ENCODE measurements at regions of chr2 and their contacts with region 1.

Region 1: GRCh38 chr2:195656859-195657633 is at the start of gene SLC39A10:
- DNase-seq: peak; percentile 98
- ATAC-seq: peak; percentile 86
- H3K4me3 Mint-ChIP-seq: peak within 1 kb of the TSS; percentile 86
- H3K27ac Mint-ChIP-seq: peak within 1 kb of the TSS; percentile 99
- H3K4me1 Mint-ChIP-seq: peaks cover 26% of the 10 kb centered on the region
- H3K27me3 Mint-ChIP-seq: no peaks in the 10 kb centered on the region
- total RNA-seq, gene SLC39A10: 24.0 to 27.8 TPM

Region 2: DNA sequence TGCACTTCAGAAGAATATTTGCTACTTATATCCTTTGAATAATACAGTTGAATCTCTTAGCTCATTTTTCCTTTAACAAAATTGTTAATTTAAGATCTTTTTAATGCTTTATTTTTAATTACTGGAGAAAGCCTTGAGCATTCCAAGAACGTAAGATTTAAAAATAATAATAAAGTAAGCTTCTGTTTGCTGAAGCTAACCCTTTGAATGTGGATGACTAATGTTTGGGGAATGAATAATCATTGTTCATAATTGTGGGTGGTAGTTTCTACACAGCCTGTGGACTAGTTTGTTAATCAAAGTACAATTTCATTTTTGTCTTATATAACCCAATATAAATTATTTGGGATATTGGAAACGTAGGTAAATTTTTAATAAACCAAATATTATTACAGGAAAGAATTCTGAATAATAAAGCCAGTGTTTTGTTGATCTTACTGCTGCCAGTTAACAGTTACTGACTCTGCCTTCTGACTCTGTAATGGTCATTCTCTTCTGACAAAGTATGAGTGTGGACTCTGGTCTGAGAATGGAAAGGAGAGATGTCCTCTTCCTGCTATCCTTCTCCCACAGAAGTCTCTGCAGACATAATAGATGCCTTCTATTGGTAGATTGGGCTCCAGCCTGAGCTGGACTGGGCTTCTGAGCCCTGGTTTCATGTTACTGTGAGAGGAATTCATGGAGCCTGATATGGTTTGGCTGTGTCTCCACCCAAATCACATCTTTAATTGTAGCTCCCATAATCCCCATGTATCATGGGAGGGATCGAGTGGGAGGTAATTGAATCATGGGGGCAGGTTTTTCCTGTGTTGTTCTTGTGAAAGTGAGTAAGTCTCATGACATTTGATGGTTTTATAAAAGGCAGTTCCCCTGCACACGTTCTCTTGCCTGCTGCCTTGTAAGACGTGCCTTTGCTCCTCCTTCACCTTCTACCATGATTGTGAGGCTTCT is 292.8 kb before region 1 on chr2:
- CTCF ChIA-PET with region 1: interaction called, 6 read pairs
- POLR2A ChIA-PET with region 1: interaction called, 7 read pairs
- intact Hi-C with region 1: loop called in 1 of 2 experiments (anchors 5 kb)
- DNase-seq: peak; percentile 17
- ATAC-seq: peak; percentile 70
- H3K4me3 Mint-ChIP-seq: no peak overlapping the region
- H3K27ac Mint-ChIP-seq: peak overlapping the region; percentile 68
- H3K4me1 Mint-ChIP-seq: peaks cover 31% of the 10 kb centered on the region
- H3K27me3 Mint-ChIP-seq: no peaks in the 10 kb centered on the region

Region 3: GRCh38 chr2:195498176-195498575 is 158.9 kb before region 1 on chr2:
- CTCF ChIA-PET with region 1: interaction called, 23 read pairs
- POLR2A ChIA-PET with region 1: no interaction called
- intact Hi-C with region 1: loop called (anchors 1 kb)
- DNase-seq: peak; percentile 68
- ATAC-seq: peak; percentile 42
- H3K4me3 Mint-ChIP-seq: no peak overlapping the region
- H3K27ac Mint-ChIP-seq: peak overlapping the region; percentile 49
- H3K4me1 Mint-ChIP-seq: peaks cover 31% of the 10 kb centered on the region
- H3K27me3 Mint-ChIP-seq: no peaks in the 10 kb centered on the region

Region 4: GRCh38 chr2:195559431-195559914 is 97.6 kb before region 1 on chr2:
- CTCF ChIA-PET with region 1: interaction called, 17 read pairs
- POLR2A ChIA-PET with region 1: interaction called, 14 read pairs
- intact Hi-C with region 1: loop called (anchors 1 kb)
- DNase-seq: peak; percentile 88
- ATAC-seq: peak; percentile 72
- H3K4me3 Mint-ChIP-seq: peak overlapping the region; percentile 33
- H3K27ac Mint-ChIP-seq: peak overlapping the region; percentile 97
- H3K4me1 Mint-ChIP-seq: peaks cover 67% of the 10 kb centered on the region
- H3K27me3 Mint-ChIP-seq: no peaks in the 10 kb centered on the region

Region 5: GRCh38 chr2:196171248-196171871 is 514.3 kb after region 1 on chr2 and contains the start of gene STK17B:
- CTCF ChIA-PET with region 1: no interaction called
- POLR2A ChIA-PET with region 1: no interaction called
- intact Hi-C with region 1: loop called (anchors 1 to 5 kb)
- DNase-seq: peak; percentile 99
- ATAC-seq: peak; percentile 76
- H3K4me3 Mint-ChIP-seq: peak within 1 kb of the TSS; percentile 92
- H3K27ac Mint-ChIP-seq: peak within 1 kb of the TSS; percentile 98
- H3K4me1 Mint-ChIP-seq: peaks cover 38% of the 10 kb centered on the region
- H3K27me3 Mint-ChIP-seq: no peaks in the 10 kb centered on the region
- total RNA-seq, gene STK17B: 159 to 178 TPM

Region 6: GRCh38 chr2:196268538-196269338 is 611.7 kb after region 1 on chr2:
- CTCF ChIA-PET with region 1: no interaction called
- POLR2A ChIA-PET with region 1: no interaction called
- intact Hi-C with region 1: loop called (anchors 5 kb)
- DNase-seq: peak; percentile 46
- ATAC-seq: peak; percentile 37
- H3K4me3 Mint-ChIP-seq: peak overlapping the region; percentile 50
- H3K27ac Mint-ChIP-seq: peak overlapping the region; percentile 89
- H3K4me1 Mint-ChIP-seq: peaks cover 75% of the 10 kb centered on the region
- H3K27me3 Mint-ChIP-seq: no peaks in the 10 kb centered on the region

Measured in activated CD4-positive, alpha-beta T cell treated with anti-CD3 and anti-CD28 coated beads for 36 hours (primary cell).